Heart right ventricle (tissue), 16 donors: ENCODE measurements at regions of chr12 and their contacts with region 1.

Region 1: GRCh38 chr12:85575120-85576096 is 260.8 kb downstream of the RASSF9 start:
- DNase-seq: peak in 1 of 2 donors; percentile 50
- ATAC-seq: peak; percentile 38 to 86 (median 75)
- H3K4me3 ChIP-seq: no peak overlapping the region
- H3K27ac ChIP-seq: no peak overlapping the region
- H3K4me1 ChIP-seq: peaks cover 0 to 7% (median 0%) of the 10 kb centered on the region in 9 donors
- H3K27me3 ChIP-seq: no peaks in the 10 kb centered on the region
- CTCF ChIP-seq: peak; percentile 46 to 88 (median 74)

Region 2: GRCh38 chr12:84994426-84994825 is 581.0 kb before region 1 on chr12:
- intact Hi-C with region 1: no loop called
- DNase-seq: no peak
- ATAC-seq: no peak
- H3K4me3 ChIP-seq: no peak overlapping the region
- H3K27ac ChIP-seq: no peak overlapping the region
- H3K4me1 ChIP-seq: no peaks in the 10 kb centered on the region
- H3K27me3 ChIP-seq: no peaks in the 10 kb centered on the region
- CTCF ChIP-seq: no peak

Region 3: DNA sequence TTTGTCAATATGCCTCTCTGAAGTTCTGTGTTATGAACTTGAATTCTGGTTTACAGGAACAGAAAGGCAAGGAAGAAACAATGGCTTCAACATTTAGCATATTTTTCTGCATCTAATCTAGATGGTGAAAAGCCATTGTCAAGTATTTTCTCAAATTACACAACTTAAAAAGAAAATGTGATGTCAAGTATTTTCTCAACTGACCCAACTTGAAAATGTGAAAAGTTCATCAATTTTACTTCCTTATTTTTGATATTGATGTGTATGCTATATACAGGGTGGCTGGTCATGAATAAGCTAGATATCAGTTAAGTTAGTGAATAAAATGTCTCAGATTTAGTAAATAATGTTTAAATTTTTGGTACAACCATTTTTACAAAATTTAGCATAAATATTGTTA is 98.7 kb before region 1 on chr12:
- intact Hi-C with region 1: loop called in 1 of 10 experiments (anchors 10 kb)
- DNase-seq: no peak
- ATAC-seq: no peak
- H3K4me3 ChIP-seq: no peak overlapping the region
- H3K27ac ChIP-seq: no peak overlapping the region
- H3K4me1 ChIP-seq: no peaks in the 10 kb centered on the region
- H3K27me3 ChIP-seq: peaks cover 0 to 5% (median 0%) of the 10 kb centered on the region in 7 donors
- CTCF ChIP-seq: no peak

Region 4: DNA sequence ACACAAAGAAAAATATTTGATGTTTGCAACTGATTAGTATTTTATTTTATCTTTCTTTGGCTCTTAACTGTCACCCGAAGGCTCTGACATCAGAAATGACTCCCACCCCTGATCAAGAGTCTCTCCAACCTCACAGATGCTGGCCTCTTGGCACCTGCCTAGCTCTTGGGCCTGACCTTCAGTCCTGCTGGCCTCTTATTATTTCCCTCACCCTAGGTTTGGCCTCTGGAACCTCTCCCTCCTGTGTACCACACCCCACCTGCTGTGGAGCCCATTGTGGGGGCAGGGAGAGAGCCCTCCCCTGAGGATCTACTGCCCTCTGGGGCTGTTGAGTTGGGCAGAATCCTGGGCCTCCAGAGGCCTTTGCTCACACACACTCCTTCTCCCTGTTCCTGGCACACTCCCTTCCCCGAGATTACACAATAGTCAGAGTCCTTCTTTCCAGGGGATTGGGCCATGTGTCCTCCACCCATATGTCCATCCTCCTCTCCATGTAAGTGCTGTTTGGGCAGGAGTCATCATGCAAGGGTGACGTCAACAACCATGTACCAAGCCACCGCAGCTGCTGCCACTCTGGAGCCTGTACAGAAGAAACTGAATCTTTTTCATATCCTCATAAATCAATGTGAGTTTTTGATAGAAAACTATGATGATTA is 136.5 kb after region 1 on chr12:
- intact Hi-C with region 1: loop called in 1 of 10 experiments (anchors 10 kb)
- DNase-seq: peak in 1 of 2 donors; percentile 21
- ATAC-seq: peak; percentile 32 to 97 (median 70)
- H3K4me3 ChIP-seq: no peak overlapping the region
- H3K27ac ChIP-seq: peak overlapping the region in 3 of 10 donors; percentile 53 to 66 (median 59)
- H3K4me1 ChIP-seq: peaks cover 0 to 32% (median 17%) of the 10 kb centered on the region in 9 donors
- H3K27me3 ChIP-seq: no peaks in the 10 kb centered on the region
- CTCF ChIP-seq: no peak

Region 5: GRCh38 chr12:85872497-85873091 is 297.2 kb after region 1 on chr12:
- intact Hi-C with region 1: loop called (anchors 1 to 5 kb)
- DNase-seq: no peak
- ATAC-seq: peak in 1 of 8 donors; percentile 58
- H3K4me3 ChIP-seq: no peak overlapping the region
- H3K27ac ChIP-seq: no peak overlapping the region
- H3K4me1 ChIP-seq: no peaks in the 10 kb centered on the region
- H3K27me3 ChIP-seq: peaks cover 0 to 2% (median 0%) of the 10 kb centered on the region in 7 donors
- CTCF ChIP-seq: peak; percentile 44 to 85 (median 72)